ENCODE measurements at regions of chr14 and their contacts with region 1.

Region 1: DNA sequence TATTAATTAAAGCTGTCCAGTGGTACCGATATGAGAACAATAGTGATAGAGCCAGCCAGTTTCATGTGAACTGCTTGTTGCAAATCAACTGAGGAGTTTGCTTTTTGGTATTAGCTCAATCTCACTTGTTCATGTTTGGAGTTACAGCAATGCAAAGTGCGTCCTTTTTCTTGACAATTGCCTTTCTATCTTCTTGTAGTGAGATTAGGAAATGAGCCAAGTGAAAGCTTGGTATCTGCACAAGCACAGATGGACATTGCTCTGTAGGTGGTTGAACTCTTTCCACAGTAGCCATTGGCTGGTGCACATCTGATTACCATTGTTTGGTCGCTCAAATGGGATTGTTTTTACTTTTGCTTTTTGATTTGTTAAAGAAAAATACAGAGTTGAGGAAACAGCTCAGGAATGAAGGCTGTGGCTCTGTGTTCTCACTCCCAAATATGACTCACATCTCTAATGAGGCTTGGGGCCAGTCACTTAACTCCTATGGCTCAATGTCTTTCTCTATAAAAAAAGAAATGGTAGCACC is 241.4 kb downstream of the BMP4 start:
- DNase-seq: no peak
- H3K4me3 ChIP-seq: no peak overlapping the region
- H3K27ac ChIP-seq: no peak overlapping the region
- H3K4me1 ChIP-seq: no peaks in the 10 kb centered on the region
- H3K27me3 ChIP-seq: peaks cover 0 to 3% (median 0%) of the 10 kb centered on the region in 5 experiments

Region 2: GRCh38 chr14:53655080-53655785 is 60.0 kb before region 1 on chr14:
- CTCF ChIA-PET with region 1: no interaction called
- POLR2A ChIA-PET with region 1: no interaction called
- DNase-seq: no peak
- H3K4me3 ChIP-seq: no peak overlapping the region
- H3K27ac ChIP-seq: no peak overlapping the region
- H3K4me1 ChIP-seq: no peaks in the 10 kb centered on the region
- H3K27me3 ChIP-seq: peaks cover 0 to 6% (median 0%) of the 10 kb centered on the region in 5 experiments

Region 3: DNA sequence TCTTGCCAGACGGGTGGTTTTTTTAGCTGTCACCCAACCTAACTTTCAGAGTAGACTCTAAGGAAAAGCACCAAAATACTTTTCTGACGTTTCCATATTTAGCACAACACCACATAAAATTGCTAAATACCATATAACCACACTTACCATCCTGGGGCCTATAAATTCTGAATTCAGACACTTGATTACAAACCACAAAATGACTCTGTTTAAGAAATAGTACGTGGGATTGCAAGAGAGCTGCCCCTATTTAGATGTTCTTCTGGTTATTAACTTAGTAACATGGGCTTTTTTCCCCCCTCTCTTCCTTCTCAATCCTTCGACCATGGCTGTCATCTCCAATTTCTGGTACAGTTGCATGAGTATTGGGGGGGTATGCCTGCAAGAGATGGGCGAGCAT is 46.4 kb before region 1 on chr14:
- CTCF ChIA-PET with region 1: no interaction called
- POLR2A ChIA-PET with region 1: interaction called, 10 read pairs
- DNase-seq: peak in 2 of 3 donors; percentile 28 to 32
- H3K4me3 ChIP-seq: no peak overlapping the region
- H3K27ac ChIP-seq: no peak overlapping the region
- H3K4me1 ChIP-seq: peaks cover 0 to 6% (median under 1%) of the 10 kb centered on the region in 4 experiments
- H3K27me3 ChIP-seq: peaks cover 0 to 23% (median 4%) of the 10 kb centered on the region in 5 experiments